GM10248 (cell line): ENCODE measurements at regions of chr13 and their contacts with region 1.

Region 1: DNA sequence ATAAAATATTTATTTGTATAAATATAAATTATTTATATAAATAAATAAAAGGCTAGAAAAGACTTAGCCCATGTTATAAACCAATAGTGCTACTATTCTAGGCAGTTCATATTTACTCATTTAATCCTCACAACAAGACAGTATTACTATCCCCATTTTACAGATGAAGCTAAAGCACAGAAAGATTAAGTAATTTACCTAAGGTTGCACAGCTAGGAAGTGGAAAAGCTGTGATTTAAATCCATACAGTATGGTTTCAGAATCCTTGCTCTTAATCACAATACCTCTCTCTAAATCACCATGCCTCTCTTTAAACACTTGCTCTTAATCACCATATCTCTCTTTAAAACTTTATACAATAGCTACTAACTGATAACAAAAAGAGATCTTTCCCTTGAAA is 13.8 kb downstream of the SPRYD7 start:
- DNase-seq: no peak
- CTCF ChIP-seq: no peak

Region 2: DNA sequence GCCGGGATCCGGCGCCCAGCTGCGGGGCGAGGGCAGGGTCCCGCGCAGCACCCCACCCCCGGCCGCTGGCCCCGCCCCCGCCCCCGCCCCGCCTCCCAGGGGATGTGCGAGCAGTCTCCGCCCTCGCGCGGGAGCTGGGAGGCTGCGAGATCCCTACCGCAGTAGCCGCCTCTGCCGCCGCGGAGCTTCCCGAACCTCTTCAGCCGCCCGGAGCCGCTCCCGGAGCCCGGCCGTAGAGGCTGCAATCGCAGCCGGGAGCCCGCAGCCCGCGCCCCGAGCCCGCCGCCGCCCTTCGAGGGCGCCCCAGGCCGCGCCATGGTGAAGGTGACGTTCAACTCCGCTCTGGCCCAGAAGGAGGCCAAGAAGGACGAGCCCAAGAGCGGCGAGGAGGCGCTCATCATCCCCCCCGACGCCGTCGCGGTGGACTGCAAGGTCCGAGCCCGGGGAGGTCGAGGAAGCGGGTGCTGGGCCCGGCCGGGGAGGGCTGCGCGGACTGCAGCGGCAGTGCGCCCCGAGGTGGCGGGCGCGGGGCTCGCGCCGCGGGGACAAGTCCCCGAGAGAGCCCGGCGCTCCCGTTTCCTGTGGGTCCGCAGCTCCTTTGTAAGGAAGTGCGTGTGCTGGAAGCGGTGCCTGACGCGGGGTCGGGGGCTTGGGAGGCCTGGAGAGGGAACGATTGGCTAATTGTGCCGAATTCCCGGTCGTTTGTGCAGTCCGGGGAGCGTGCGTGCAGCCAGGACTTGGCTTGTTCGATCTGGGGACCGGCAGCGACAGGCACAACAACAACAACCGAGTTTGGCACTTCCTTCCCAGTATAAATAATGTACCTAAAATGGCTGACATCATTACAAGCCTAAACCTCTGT is 1689.0 kb before region 1 on chr13 and contains the start of gene ITM2B:
- CTCF ChIA-PET with region 1: no interaction called
- POLR2A ChIA-PET with region 1: no interaction called
- DNase-seq: peak; percentile 70
- CTCF ChIP-seq: peak; percentile 45

Region 3: DNA sequence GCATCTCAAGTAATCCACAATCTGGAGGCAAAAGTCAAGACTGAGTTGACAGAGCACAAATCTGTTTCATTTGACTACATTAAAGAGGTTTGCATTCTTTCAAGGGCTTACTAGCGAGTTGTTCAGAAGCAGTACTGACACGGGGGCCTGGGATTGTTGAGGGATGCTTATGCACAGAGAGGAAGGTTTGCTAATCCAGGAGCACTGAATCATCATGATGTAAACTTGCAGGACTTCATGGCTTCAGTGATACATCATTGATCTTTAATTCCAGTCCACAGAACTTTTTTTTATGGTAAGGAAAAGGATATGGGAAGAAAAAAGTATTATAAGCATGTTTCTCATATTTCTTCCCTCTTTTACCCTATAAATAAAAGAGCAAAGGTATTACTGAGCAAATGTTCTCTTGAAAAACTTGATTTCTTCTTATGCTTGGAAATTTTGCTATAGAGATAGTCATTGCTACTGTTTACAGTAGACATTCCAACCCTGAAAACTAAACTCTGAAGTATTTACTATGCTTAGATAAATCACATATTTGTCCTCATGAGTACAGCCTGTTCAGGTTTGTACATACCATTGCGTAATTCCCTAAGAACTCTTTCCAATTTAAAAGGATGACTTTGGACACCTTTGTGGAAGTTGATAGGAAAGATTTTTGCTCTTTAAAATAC is 64.0 kb before region 1 on chr13:
- CTCF ChIA-PET with region 1: no interaction called
- POLR2A ChIA-PET with region 1: no interaction called
- DNase-seq: no peak
- CTCF ChIP-seq: no peak

Region 4: DNA sequence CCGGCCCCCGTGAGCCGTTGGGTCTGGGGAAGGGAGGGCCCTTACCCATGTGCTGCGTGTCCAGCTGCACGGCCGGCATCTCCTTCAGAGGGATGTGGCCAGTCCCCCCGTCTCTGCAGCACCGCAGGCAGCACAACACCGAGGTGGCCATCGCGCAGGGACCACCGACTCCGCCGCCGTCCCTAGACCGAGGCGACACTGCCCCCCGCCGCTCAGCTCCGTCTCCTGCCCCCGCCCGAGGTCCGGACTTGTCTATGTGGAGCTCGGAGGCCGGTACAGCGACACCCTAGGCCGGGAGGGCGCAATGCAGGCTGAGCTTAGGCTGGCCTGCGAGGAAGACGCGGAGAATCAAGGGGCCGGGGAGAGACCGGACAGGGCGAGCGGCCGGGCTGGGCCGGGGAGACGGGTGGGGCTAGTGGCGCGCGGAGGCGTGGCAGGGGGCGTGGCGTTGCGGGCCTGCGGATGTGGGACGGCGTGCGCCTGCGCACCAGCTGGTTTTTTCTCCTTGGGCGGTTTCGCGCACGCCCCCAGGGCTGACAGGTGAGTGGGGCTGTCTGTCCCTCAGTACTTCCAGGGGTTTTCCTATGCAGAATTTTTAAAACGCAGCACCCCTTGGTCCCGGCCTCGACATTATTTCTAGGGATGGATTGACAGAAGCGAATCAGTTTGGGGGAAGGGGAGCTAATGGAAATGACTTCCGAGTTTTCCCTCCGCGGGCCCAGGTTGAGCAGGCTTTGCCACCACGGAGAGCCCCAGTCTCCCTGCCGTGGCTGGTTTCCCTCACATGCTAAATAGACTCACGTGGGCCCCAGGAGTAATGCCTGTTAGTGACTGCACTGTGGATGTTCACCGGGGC is 14.0 kb after region 1 on chr13 and contains the start of gene SPRYD7:
- CTCF ChIA-PET with region 1: interaction called, 24 read pairs
- POLR2A ChIA-PET with region 1: interaction called, 4 read pairs
- DNase-seq: peak; percentile 96
- CTCF ChIP-seq: peak; percentile 100

Region 5: DNA sequence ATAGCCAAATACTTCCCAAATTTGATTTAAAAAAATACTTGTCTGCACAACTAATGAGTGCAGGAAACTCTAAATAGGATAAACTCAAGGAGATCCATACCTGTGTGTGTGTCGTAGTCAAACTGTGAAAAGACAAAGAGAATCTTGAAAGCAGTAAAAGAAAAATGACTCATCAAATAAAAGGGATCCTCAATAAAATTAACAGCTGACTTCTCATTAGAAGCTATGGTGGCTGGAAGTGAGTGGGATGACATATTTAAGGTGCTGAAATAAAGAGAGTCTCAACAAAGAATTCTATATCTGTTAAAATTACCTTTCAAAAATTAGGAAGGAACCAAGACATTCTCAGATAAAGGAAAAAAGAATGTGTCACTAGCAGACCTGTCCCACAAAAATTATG is 1001.0 kb after region 1 on chr13:
- CTCF ChIA-PET with region 1: no interaction called
- POLR2A ChIA-PET with region 1: no interaction called
- DNase-seq: no peak
- CTCF ChIP-seq: no peak